ENCODE measurements at regions of chrX and their contacts with region 1.

Region 1: GRCh38 chrX:108018656-108019381 is 26.0 kb upstream of the VSIG1 start:
- DNase-seq: no peak
- ATAC-seq: no peak
- H3K4me3 ChIP-seq: no peak overlapping the region
- H3K27ac ChIP-seq: no peak overlapping the region
- H3K4me1 ChIP-seq: no peaks in the 10 kb centered on the region
- H3K27me3 ChIP-seq: no peaks in the 10 kb centered on the region

Region 2: GRCh38 chrX:108064613-108065012 is 45.8 kb after region 1 on chrX:
- intact Hi-C with region 1: loop called in 1 of 4 experiments (anchors 10 kb)
- DNase-seq: no peak
- ATAC-seq: no peak
- H3K4me3 ChIP-seq: no peak overlapping the region
- H3K27ac ChIP-seq: no peak overlapping the region
- H3K4me1 ChIP-seq: no peaks in the 10 kb centered on the region
- H3K27me3 ChIP-seq: no peaks in the 10 kb centered on the region